ENCODE measurements at regions of chr6 and their contacts with region 1.

Region 1: GRCh38 chr6:36027501-36028087 is at the start of gene MAPK14:
- DNase-seq: peak; percentile 92
- ATAC-seq: peak; percentile 91
- H3K4me3 Mint-ChIP-seq: peak within 1 kb of the TSS; percentile 92
- H3K27ac Mint-ChIP-seq: peak within 1 kb of the TSS; percentile 95
- H3K4me1 Mint-ChIP-seq: peaks cover 40% of the 10 kb centered on the region
- H3K27me3 Mint-ChIP-seq: peaks cover 16% of the 10 kb centered on the region
- CTCF ChIP-seq: no peak
- total RNA-seq, gene MAPK14: 39.7 and 45.4 TPM in 2 replicates

Region 2: DNA sequence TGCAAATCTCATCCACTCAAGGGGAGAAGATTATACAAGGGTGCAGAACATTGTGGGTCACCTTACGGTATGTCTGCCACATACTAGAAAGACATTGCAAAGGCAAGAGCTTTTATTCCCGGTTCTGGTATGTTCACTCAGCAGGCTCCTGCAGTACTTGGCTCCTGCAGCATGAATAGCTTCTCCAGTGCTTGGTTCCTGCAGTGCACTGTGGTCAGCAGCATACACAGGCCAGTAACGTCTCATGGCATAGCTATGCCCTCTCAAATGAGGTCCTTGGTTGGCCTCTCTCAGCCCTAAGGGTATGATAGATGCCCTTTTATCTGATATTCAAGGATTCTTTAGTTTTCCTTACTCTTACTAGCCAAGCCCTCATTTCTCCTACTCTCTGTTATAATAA is 899.1 kb before region 1 on chr6:
- CTCF ChIA-PET with region 1: no interaction called
- POLR2A ChIA-PET with region 1: no interaction called
- intact Hi-C with region 1: no loop called
- DNase-seq: no peak
- ATAC-seq: no peak
- H3K4me3 Mint-ChIP-seq: no peak overlapping the region
- H3K27ac Mint-ChIP-seq: no peak overlapping the region
- H3K4me1 Mint-ChIP-seq: no peaks in the 10 kb centered on the region
- H3K27me3 Mint-ChIP-seq: peaks cover 4% of the 10 kb centered on the region
- CTCF ChIP-seq: no peak

Region 3: GRCh38 chr6:35259194-35259947 is 768.2 kb before region 1 on chr6 and contains the start of gene ZNF76:
- CTCF ChIA-PET with region 1: no interaction called
- POLR2A ChIA-PET with region 1: interaction called, 18 read pairs
- intact Hi-C with region 1: no loop called
- DNase-seq: peak; percentile 89
- ATAC-seq: peak; percentile 81
- H3K4me3 Mint-ChIP-seq: peak within 1 kb of the TSS; percentile 97
- H3K27ac Mint-ChIP-seq: peak within 1 kb of the TSS; percentile 93
- H3K4me1 Mint-ChIP-seq: peaks cover 53% of the 10 kb centered on the region
- H3K27me3 Mint-ChIP-seq: no peaks in the 10 kb centered on the region
- CTCF ChIP-seq: no peak
- total RNA-seq, gene ZNF76: 54.8 and 57.9 TPM in 2 replicates

Region 4: GRCh38 chr6:35920793-35921732 is 106.5 kb before region 1 on chr6 and contains the start of gene SRPK1:
- CTCF ChIA-PET with region 1: no interaction called
- POLR2A ChIA-PET with region 1: interaction called, 6 read pairs
- intact Hi-C with region 1: loop called (anchors 2 kb)
- DNase-seq: peak; percentile 78
- ATAC-seq: peak; percentile 88
- H3K4me3 Mint-ChIP-seq: peak within 1 kb of the TSS; percentile 92
- H3K27ac Mint-ChIP-seq: peak within 1 kb of the TSS; percentile 86
- H3K4me1 Mint-ChIP-seq: peaks cover 33% of the 10 kb centered on the region
- H3K27me3 Mint-ChIP-seq: no peaks in the 10 kb centered on the region
- CTCF ChIP-seq: no peak
- total RNA-seq, gene SRPK1: 49.6 and 51.5 TPM in 2 replicates

Region 5: DNA sequence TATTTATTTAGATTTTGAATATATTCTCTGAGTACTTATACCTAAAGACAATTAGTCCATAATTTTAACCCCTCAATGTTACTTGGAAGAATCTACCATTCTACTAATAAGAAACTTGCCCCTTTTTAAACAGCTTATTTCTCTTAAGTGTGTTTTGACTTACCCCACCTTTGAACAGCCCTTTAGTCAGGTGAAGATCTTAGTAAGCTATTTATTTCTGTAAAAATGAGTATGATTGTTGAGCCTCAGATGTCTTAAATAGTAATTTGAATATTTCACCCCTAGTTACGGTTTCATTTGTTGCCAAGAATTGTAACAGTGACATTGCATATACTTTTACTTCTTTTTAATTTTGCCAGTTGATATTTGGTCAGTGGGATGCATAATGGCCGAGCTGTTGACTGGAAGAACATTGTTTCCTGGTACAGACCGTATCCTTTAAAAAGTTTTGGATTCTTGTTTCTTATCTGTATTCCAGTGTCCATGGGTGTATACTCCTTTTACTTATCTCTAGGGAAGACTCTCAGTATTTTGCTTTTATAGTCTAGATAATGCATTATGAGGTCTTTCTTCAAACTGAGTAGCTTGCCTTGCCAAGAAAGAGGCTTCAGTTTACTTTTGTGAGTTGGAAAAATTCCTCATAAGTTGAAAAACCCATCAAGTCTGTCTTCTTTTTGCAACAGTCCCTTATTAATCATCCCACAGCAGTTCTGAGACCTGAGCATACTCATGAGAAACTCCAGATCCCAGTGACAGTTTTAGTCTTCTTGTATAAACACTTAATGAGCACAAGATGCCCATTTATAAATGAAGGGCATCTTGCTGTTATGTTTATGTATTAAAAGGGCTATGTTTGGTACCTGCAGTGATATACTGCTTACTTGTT is 48.8 kb after region 1 on chr6:
- CTCF ChIA-PET with region 1: no interaction called
- POLR2A ChIA-PET with region 1: no interaction called
- intact Hi-C with region 1: no loop called
- DNase-seq: no peak
- ATAC-seq: no peak
- H3K4me3 Mint-ChIP-seq: no peak overlapping the region
- H3K27ac Mint-ChIP-seq: no peak overlapping the region
- H3K4me1 Mint-ChIP-seq: peaks cover 8% of the 10 kb centered on the region
- H3K27me3 Mint-ChIP-seq: no peaks in the 10 kb centered on the region
- CTCF ChIP-seq: no peak

Region 6: DNA sequence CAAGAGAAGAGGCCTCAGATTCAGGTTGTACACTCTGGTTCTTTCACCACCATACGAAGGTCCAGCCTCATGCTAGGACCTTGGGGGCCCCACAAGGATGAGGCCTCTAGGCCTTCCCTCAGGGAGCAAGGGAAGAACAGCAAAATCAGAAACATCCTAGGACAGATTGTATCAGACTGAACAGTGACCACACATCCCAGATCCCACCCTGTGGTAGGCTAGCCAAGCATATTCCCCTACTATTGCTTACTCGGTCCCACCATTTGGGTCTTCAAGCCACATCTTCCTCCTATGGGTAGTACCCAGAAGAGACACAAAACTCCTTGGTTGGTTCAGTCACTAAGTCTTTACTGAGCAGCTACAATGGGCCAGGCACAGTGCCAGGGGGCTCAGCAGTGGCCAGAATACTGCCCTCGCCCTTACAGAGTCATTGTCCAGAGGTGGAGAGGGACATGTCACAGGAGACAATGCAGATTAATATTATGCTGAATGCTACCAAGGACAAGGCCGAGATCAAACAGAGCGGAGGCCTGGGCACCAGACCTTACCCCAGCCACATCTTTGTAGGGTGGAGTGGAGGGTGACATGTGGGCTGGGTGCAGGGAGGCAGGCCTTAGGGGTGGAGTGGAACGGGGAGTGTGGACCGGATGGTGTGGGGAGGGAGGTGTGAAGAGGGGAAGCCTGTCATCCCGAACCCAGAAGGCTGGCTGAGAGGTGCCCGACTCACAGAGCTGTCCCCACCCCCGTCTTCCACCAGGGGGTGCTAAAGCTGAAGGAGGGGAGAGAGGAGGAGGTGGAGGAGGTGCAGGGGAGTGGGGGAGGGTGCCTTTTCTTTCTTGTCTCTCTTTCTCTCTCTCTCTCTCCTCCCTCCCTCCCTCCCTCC is 95.9 kb after region 1 on chr6:
- CTCF ChIA-PET with region 1: interaction called, 17 read pairs
- POLR2A ChIA-PET with region 1: interaction called, 25 read pairs
- intact Hi-C with region 1: no loop called
- DNase-seq: peak; percentile 72
- ATAC-seq: peak; percentile 73
- H3K4me3 Mint-ChIP-seq: peak overlapping the region; percentile 41
- H3K27ac Mint-ChIP-seq: peak overlapping the region; percentile 86
- H3K4me1 Mint-ChIP-seq: peaks cover 73% of the 10 kb centered on the region
- H3K27me3 Mint-ChIP-seq: no peaks in the 10 kb centered on the region
- CTCF ChIP-seq: no peak

Region 7: GRCh38 chr6:36302227-36302976 is 274.8 kb after region 1 on chr6:
- CTCF ChIA-PET with region 1: interaction called, 6 read pairs
- POLR2A ChIA-PET with region 1: no interaction called
- intact Hi-C with region 1: loop called (anchors 1 kb)
- DNase-seq: peak; percentile 65
- ATAC-seq: peak; percentile 99
- H3K4me3 Mint-ChIP-seq: no peak overlapping the region
- H3K27ac Mint-ChIP-seq: no peak overlapping the region
- H3K4me1 Mint-ChIP-seq: peaks cover 1% of the 10 kb centered on the region
- H3K27me3 Mint-ChIP-seq: peaks cover 21% of the 10 kb centered on the region
- CTCF ChIP-seq: peak; percentile 82